GM10248 (cell line): ENCODE measurements at regions of chr6 and their contacts with region 1.

Region 1: GRCh38 chr6:125956506-125957390 is at the start of gene HINT3:
- DNase-seq: peak; percentile 95
- CTCF ChIP-seq: peak; percentile 94

Region 2: DNA sequence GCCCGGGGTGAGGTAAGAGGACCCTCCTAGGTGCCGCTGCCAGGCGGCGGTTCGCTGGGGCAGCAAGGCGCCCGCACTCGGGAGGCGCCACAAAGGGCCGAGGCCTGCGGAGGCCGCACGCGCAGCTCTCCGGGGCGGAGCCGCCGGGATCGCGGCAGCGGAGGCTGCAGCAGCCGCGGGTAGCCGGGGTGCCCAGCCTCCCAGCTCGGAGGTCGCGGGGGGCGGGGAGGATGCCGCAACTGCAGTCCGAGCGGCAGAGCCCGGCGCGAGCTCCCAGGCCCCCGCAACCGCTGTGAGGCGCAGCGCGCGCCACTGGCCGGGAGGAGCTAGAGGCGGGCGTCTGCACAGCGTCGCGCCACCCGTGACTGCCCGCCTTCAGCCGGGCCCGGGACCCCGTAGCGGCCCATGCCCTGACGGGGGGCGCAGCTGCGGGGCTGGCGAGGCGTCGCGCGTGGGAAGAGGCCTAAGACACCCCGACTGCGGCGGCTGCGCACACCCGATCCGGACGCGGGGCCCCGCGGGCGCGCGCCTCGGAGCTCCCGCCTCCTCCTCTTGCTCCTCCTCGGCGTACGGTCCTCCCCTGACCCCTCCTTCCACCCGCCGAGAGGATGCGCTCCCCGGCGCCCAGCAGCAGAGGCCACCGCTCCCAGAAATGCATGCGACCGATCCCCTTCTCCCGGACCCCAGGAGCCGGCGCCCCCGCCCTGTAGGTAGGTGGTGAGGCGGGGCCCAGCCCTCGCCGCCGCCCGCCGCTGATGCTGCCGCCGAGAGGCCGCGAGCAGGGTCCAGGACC is 166.2 kb before region 1 on chr6 and contains the start of gene NCOA7:
- CTCF ChIA-PET with region 1: interaction called, 241 read pairs
- POLR2A ChIA-PET with region 1: no interaction called
- DNase-seq: peak; percentile 85
- CTCF ChIP-seq: no peak

Region 3: GRCh38 chr6:125888989-125889656 is 67.6 kb before region 1 on chr6:
- CTCF ChIA-PET with region 1: interaction called, 16 read pairs
- POLR2A ChIA-PET with region 1: no interaction called
- DNase-seq: peak; percentile 15
- CTCF ChIP-seq: peak; percentile 36

Region 4: DNA sequence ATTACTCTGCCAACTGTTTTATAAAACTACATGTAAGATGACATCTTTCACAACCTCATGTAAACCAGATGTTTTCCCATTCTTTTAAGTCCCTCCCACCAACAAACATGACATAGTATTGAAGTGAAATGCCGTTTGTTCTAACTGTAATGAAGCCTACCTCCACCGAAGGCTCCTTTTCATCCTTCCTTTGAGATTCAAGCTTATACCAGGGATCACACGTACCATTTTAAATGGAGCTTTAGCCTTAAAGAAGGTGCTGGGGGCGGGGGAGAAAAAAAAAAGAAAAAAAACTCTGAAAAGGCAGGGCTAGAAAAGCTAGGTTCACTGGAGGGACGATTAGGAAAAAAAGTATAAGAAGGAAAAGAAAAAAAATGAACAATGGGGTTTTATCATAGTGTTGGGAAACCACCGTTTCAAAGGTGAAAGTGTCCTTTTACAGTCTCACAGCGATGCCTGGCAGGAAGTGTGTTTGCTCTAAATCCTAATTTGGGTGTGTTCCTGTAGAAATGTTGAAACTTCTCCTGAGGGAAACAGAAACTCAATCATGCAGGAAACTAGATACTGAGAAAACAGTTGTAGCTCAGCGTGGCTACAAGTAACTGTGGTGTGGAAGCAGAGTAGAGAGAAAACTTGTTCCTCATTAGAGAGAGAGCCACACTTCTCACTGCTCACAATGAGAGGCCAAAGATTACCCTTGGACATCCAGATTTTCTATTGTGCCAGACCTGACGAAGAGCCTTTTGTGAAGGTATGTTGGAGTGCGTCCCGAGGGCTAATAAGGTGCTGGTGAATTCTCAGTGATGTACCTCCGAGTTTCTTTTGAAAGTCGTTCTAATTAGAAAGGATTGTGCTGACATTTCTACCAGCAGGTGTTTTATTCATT is 37.8 kb before region 1 on chr6:
- CTCF ChIA-PET with region 1: interaction called, 138 read pairs
- POLR2A ChIA-PET with region 1: no interaction called
- DNase-seq: peak; percentile 71
- CTCF ChIP-seq: no peak

Region 5: GRCh38 chr6:125944434-125944816 is 12.3 kb before region 1 on chr6:
- CTCF ChIA-PET with region 1: interaction called, 61 read pairs
- POLR2A ChIA-PET with region 1: no interaction called
- DNase-seq: no peak
- CTCF ChIP-seq: no peak